A673 (cell line): ENCODE measurements at regions of chr22 and their contacts with region 1.

Region 1: GRCh38 chr22:38327805-38328204 is 10.6 kb upstream of the CSNK1E start:
- DNase-seq: peak; percentile 30
- H3K4me3 ChIP-seq: no peak overlapping the region
- H3K27ac ChIP-seq: no peak overlapping the region
- H3K4me1 ChIP-seq: no peaks in the 10 kb centered on the region
- H3K27me3 ChIP-seq: no peaks in the 10 kb centered on the region
- CTCF ChIP-seq: no peak

Region 2: GRCh38 chr22:38135133-38135751 is 192.6 kb before region 1 on chr22:
- CTCF ChIA-PET with region 1: no interaction called
- POLR2A ChIA-PET with region 1: no interaction called
- intact Hi-C with region 1: no loop called
- DNase-seq: no peak
- H3K4me3 ChIP-seq: no peak overlapping the region
- H3K27ac ChIP-seq: no peak overlapping the region
- H3K4me1 ChIP-seq: no peaks in the 10 kb centered on the region
- H3K27me3 ChIP-seq: no peaks in the 10 kb centered on the region
- CTCF ChIP-seq: no peak

Region 3: DNA sequence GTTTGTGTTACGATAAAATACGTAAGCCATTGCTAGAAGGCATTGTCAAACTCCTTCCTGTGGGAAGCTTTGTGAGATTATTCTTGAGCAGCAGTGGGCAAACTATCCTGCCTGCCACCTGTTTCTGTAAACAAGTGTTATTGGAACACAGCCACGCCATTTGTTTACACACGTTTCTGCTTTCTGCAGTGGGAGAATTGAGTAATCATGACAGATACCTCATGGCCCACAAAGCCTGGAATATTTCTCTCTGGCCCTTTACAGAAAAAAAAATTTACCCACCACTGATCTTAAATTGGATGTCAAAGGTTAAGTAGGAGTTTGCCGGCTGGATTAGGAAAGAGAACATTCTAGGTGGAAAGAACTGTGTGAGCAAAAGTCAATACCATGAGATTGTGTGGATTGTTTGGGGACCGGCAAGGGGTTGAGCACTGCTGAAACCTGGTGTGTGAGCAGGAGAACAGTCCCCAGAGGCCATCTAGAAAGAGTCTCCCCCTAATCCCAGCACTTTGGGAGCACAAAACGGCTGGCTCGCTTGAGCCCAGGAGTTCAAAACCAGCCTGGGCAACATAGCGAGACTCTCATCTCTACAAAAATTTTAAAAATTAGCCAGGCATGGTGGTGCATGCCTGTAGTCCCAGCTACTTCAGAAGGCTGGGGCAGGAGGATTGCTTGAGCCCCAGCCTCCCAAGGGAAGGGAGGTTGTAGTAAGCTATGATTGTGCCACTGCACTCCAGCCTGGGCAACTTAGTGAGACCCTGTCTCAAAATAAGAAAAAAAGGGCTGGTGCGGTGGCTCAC is 140.2 kb before region 1 on chr22:
- CTCF ChIA-PET with region 1: no interaction called
- POLR2A ChIA-PET with region 1: no interaction called
- intact Hi-C with region 1: no loop called
- DNase-seq: no peak
- H3K4me3 ChIP-seq: no peak overlapping the region
- H3K27ac ChIP-seq: no peak overlapping the region
- H3K4me1 ChIP-seq: no peaks in the 10 kb centered on the region
- H3K27me3 ChIP-seq: no peaks in the 10 kb centered on the region
- CTCF ChIP-seq: no peak

Region 4: DNA sequence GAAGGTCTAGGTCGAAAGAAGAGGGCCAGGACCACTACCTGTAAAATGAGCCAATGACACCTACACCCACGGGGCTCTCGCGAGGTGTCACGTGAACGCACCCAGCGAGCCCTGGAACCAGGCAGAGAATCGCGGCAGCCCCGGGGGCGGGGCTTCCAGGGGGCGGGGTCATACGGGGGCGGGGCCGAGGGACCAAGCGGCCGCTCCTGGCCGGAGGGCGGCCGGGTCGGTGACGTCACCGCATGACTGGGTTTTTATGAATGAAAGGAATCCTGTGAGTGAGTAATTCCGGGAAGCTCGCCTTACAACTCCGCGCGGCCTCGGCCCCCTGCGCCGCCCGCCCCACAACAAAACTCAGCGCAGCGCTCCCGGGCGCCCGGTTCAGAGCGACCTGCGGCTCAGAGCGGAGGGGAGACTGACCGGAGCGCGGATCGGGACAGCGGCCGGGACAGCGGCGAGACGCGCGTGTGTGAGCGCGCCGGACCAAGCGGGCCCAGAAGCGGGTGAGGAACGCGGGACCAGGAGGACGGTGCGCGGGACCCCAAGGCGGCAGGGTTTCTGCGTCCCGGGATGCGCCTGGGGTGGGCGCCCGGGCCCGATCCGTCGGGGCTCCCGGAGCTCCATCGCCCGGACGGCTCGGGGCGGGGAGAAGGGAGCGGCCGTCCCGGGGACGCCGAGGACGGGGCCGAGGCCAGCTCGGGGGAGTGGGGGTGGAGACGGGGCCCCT is 125.9 kb before region 1 on chr22 and contains the start of gene MAFF:
- CTCF ChIA-PET with region 1: no interaction called
- POLR2A ChIA-PET with region 1: interaction called, 15 read pairs
- intact Hi-C with region 1: no loop called
- DNase-seq: peak; percentile 92
- H3K4me3 ChIP-seq: peak within 1 kb of the TSS; percentile 87
- H3K27ac ChIP-seq: peak within 1 kb of the TSS; percentile 70
- H3K4me1 ChIP-seq: no peaks in the 10 kb centered on the region
- H3K27me3 ChIP-seq: no peaks in the 10 kb centered on the region
- CTCF ChIP-seq: no peak
- total RNA-seq, gene MAFF: 5.0 and 6.3 TPM in 2 replicates

Region 5: GRCh38 chr22:38228873-38229740 is 98.7 kb before region 1 on chr22:
- CTCF ChIA-PET with region 1: no interaction called
- POLR2A ChIA-PET with region 1: interaction called, 13 read pairs
- intact Hi-C with region 1: no loop called
- DNase-seq: no peak
- H3K4me3 ChIP-seq: no peak overlapping the region
- H3K27ac ChIP-seq: peak overlapping the region; percentile 8
- H3K4me1 ChIP-seq: no peaks in the 10 kb centered on the region
- H3K27me3 ChIP-seq: no peaks in the 10 kb centered on the region
- CTCF ChIP-seq: no peak